Activated CD4-positive, alpha-beta memory T cell treated with anti-CD3 and anti-CD28 coated beads for 36 hours (primary cell): ENCODE measurements at regions of chr2 and their contacts with region 1.

Region 1: DNA sequence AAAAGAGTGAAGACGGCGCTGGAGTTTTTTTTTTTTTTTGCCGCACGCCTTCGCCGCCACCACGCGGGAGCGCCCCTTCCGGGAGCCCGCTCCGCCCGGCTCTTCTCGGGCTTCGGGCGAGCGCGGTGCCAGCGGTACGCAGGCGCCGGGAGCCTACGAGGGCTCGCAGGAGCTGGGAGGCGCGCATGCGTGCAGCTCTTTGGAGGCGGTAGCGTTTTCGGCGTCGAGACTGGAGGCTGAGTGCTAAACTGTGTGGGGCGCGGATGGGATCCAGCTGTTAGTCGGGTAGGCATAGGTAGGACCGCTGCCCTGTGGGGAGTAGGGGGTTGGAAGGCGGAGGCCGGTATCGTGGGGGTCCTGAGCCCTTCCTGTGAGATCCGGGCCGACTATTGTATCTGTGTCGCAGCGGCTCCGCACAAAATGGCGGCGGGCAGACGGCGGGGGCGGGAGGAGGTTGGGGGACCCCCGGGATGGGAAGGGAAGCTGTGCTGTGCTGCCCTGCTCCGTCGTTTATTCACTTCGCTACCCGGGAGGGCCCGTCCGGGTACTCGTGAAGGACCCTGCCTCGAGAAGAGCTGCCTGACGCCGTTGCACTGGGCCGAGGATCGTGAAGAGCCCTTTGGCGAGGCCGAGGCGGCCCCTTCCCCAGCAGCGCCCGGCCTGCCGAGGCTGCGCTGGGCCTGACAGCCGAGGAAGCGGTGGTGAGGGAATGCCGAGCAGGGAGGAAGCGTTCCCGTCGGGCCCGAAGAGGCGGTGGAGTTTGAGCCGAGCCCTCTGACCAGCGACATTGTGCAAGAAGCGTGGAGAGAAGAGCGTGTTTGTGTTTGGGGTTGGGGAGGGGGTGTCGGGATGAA is at the start of gene ZNF638:
- DNase-seq: peak; percentile 94
- H3K4me3 Mint-ChIP-seq: peak within 1 kb of the TSS; percentile 94
- H3K27ac Mint-ChIP-seq: peak within 1 kb of the TSS; percentile 93
- H3K4me1 Mint-ChIP-seq: peaks cover 31% of the 10 kb centered on the region
- H3K27me3 Mint-ChIP-seq: peaks cover 2% of the 10 kb centered on the region
- total RNA-seq, gene ZNF638: 74.2 to 87.4 TPM

Region 2: GRCh38 chr2:71353248-71353647 is 21.4 kb after region 1 on chr2:
- CTCF ChIA-PET with region 1: interaction called, 14 read pairs
- POLR2A ChIA-PET with region 1: interaction called, 10 read pairs
- intact Hi-C with region 1: loop called (anchors 1 kb)
- DNase-seq: no peak
- H3K4me3 Mint-ChIP-seq: peak overlapping the region; percentile 4
- H3K27ac Mint-ChIP-seq: peak overlapping the region; percentile 49
- H3K4me1 Mint-ChIP-seq: peaks cover 52% of the 10 kb centered on the region
- H3K27me3 Mint-ChIP-seq: no peaks in the 10 kb centered on the region